Dorsolateral prefrontal cortex (tissue), 120 donors: ENCODE measurements at regions of chr7 and their contacts with region 1.

Region 1: GRCh38 chr7:30164567-30164966 is 29.8 kb downstream of the MTURN start:
- DNase-seq: peak in 1 of 10 donors; percentile 46
- H3K4me3 ChIP-seq: peak overlapping the region in 4 of 59 donors; percentile 2 to 48 (median 34)
- H3K27ac ChIP-seq: peak overlapping the region in 58 of 59 donors; percentile 61 to 99 (median 94)
- H3K27me3 ChIP-seq: no peaks in the 10 kb centered on the region
- CTCF ChIP-seq: peak; percentile 41 to 92 (median 72)

Region 2: GRCh38 chr7:30412810-30413504 is 248.4 kb after region 1 on chr7:
- intact Hi-C with region 1: loop called (anchors 2 to 5 kb)
- DNase-seq: peak in 1 of 10 donors; percentile 18
- H3K4me3 ChIP-seq: no peak overlapping the region
- H3K27ac ChIP-seq: peak overlapping the region in 10 of 59 donors; percentile 8 to 46 (median 28)
- H3K27me3 ChIP-seq: no peaks in the 10 kb centered on the region
- CTCF ChIP-seq: peak; percentile 44 to 80 (median 66)